ENCODE measurements at regions of chr11 and their contacts with region 1.

Region 1: DNA sequence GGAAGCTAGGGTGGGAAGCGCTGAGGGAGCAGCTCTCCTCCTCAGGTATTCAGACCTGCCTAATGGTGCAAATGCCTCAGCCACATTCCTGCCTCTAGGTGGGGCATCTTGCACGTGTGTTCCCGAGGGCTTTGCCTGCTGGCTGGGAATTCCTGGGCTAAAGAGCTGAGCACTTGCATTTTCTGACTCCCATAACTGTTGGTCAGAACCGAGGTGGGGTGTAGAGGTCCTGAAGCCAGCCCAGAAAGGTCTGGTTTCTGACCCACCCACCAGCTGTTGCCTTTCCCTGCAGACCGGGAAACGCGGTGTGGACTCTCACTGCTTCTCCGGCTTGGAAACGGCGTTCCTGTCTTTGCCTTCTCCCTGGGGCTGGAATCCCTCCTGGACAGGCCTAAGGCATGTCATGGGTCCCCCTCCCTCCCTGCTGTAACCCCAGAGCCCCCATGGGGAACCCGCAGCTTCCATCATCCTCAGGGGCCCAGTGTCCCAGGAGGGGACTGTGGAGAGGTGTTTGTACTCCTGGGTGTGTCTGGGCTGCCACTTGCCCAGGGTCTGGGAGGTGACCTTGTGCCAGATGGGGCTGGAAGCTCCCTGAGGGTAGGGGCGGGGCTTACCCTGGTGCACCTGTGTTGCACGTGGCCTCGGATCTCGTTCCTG is 24.0 kb upstream of the SMIM38 start:
- DNase-seq: peak; percentile 98
- ATAC-seq: peak; percentile 97
- H3K4me3 ChIP-seq: no peak overlapping the region
- H3K27ac ChIP-seq: peak overlapping the region; percentile 11; the same call in 1 of the 2 replicates
- H3K4me1 ChIP-seq: peaks cover 17% of the 10 kb centered on the region
- H3K27me3 ChIP-seq: no peaks in the 10 kb centered on the region
- CTCF ChIP-seq: peak; percentile 95

Region 2: DNA sequence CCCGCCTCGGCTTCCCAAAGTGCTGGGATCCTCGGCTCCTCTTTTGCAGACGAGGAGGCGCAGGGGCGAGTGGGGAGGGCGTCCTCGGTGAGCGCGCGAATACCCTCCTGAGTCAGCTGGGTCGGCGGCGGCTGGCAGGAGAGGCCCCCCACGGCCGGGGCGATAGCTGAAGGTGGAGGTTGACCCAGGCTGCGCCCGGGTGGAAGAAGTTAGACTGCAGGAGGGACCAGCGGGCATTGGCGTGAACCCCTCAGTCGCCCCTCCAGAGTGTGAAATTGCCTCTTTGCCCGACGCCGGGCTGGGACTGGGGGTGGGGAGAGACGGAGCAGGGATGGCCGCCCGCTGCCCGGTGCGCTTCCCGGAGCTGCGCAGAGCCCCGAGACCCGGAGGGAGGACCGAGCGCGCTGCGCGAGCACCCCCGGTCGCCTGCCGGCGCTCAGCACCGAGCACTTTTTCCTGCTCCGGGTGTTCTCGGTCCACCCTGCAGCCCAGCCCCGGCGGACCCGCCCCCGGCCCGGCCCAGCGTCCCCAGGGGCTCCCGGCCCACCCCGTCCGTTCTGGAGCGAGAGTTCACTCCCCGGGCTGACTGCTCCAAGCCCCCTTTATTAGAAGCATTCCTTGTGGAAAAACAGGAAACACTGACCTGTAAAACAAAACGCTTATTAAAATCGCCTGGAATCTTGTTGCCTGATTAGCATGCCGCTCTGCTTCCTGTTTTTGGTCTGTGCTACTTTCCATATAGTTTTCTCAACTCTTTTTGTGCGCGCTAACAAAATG is 276.4 kb before region 1 on chr11:
- CTCF ChIA-PET with region 1: no interaction called
- POLR2A ChIA-PET with region 1: no interaction called
- intact Hi-C with region 1: no loop called
- DNase-seq: no peak
- ATAC-seq: no peak; the same call in 1 of the 2 replicates
- H3K4me3 ChIP-seq: peak overlapping the region; percentile 63
- H3K27ac ChIP-seq: no peak overlapping the region
- H3K4me1 ChIP-seq: peaks cover 18% of the 10 kb centered on the region
- H3K27me3 ChIP-seq: no peaks in the 10 kb centered on the region
- CTCF ChIP-seq: no peak

Region 3: GRCh38 chr11:68956142-68956541 is 175.6 kb before region 1 on chr11:
- CTCF ChIA-PET with region 1: no interaction called
- POLR2A ChIA-PET with region 1: no interaction called
- intact Hi-C with region 1: no loop called
- DNase-seq: no peak
- ATAC-seq: peak; percentile 27; the same call in 1 of the 2 replicates
- H3K4me3 ChIP-seq: no peak overlapping the region
- H3K27ac ChIP-seq: no peak overlapping the region
- H3K4me1 ChIP-seq: peaks cover 8% of the 10 kb centered on the region; the same call in 1 of the 2 replicates
- H3K27me3 ChIP-seq: no peaks in the 10 kb centered on the region
- CTCF ChIP-seq: peak; percentile 58

Region 4: GRCh38 chr11:68989936-68990606 is 141.7 kb before region 1 on chr11:
- CTCF ChIA-PET with region 1: no interaction called
- POLR2A ChIA-PET with region 1: no interaction called
- intact Hi-C with region 1: no loop called
- DNase-seq: no peak
- ATAC-seq: no peak
- H3K4me3 ChIP-seq: no peak overlapping the region
- H3K27ac ChIP-seq: no peak overlapping the region
- H3K4me1 ChIP-seq: no peaks in the 10 kb centered on the region
- H3K27me3 ChIP-seq: peaks cover 22% of the 10 kb centered on the region
- CTCF ChIP-seq: no peak

Region 5: GRCh38 chr11:69101115-69101791 is 30.5 kb before region 1 on chr11:
- CTCF ChIA-PET with region 1: interaction called, 13 read pairs
- POLR2A ChIA-PET with region 1: interaction called, 3 read pairs
- intact Hi-C with region 1: no loop called
- DNase-seq: peak; percentile 95
- ATAC-seq: peak; percentile 84
- H3K4me3 ChIP-seq: no peak overlapping the region
- H3K27ac ChIP-seq: no peak overlapping the region
- H3K4me1 ChIP-seq: peaks cover 17% of the 10 kb centered on the region
- H3K27me3 ChIP-seq: no peaks in the 10 kb centered on the region
- CTCF ChIP-seq: peak; percentile 98

Region 6: GRCh38 chr11:69115586-69116560 is 15.9 kb before region 1 on chr11:
- CTCF ChIA-PET with region 1: interaction called, 13 read pairs
- POLR2A ChIA-PET with region 1: no interaction called
- intact Hi-C with region 1: no loop called
- DNase-seq: peak; percentile 63
- ATAC-seq: peak; percentile 81
- H3K4me3 ChIP-seq: no peak overlapping the region
- H3K27ac ChIP-seq: no peak overlapping the region
- H3K4me1 ChIP-seq: peaks cover 15% of the 10 kb centered on the region
- H3K27me3 ChIP-seq: no peaks in the 10 kb centered on the region
- CTCF ChIP-seq: no peak

Region 7: DNA sequence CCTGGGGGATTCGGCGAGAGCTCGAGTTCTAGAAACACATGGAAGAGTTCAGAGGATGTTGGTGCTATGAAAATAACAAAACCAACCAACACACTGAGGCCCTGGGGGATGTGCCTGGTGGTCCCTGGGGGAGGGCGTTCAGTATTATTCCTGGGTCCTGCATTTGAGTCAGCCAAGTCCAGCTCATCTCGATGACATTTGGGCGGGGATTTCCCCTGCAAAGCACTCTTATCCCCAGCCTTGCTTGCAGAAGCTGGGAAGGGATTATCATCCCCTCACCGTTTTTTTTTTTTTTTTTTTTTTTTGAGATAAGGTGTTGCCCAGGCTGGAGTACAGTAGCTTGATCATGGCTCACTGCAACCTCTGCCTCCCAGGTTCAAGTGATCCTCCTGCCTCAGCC is 21.9 kb after region 1 on chr11:
- CTCF ChIA-PET with region 1: no interaction called
- POLR2A ChIA-PET with region 1: no interaction called
- intact Hi-C with region 1: no loop called
- DNase-seq: no peak
- ATAC-seq: no peak
- H3K4me3 ChIP-seq: no peak overlapping the region
- H3K27ac ChIP-seq: no peak overlapping the region
- H3K4me1 ChIP-seq: no peaks in the 10 kb centered on the region
- H3K27me3 ChIP-seq: no peaks in the 10 kb centered on the region
- CTCF ChIP-seq: no peak